ENCODE measurements at regions of chr17 and their contacts with region 1.

Region 1: DNA sequence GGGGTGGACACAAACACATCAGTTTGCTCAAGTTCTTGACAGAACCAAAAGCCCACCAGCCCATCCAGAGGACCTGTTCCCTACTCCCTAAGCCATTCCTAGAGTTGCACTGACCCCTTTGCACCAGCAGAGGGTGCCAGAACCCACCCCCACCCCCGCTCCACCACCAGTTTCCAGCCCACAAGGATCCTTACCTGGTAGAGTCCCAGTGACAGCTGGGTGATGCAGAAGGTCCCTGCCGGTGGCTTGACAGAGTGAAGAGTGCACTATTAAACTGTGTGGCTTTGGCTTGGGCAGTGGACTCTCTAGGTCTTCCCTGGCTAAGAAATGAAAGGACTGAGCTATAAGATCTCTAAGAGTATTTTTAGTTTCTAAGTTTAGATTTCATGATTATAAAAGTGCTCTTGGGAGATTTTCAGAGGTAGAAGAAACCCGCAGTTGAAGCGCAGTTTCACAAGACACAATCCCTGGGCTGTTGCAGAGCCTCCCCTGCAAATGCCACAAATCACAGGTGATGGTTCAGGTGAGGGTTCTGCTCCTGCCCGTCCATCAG is 73.3 kb upstream of the MTMR4 start:
- DNase-seq: peak; percentile 55 to 78
- ATAC-seq: peak; percentile 68
- H3K4me3 ChIP-seq: no peak overlapping the region
- H3K27ac ChIP-seq: no peak overlapping the region
- H3K4me1 ChIP-seq: no peaks in the 10 kb centered on the region
- H3K27me3 ChIP-seq: no peaks in the 10 kb centered on the region

Region 2: DNA sequence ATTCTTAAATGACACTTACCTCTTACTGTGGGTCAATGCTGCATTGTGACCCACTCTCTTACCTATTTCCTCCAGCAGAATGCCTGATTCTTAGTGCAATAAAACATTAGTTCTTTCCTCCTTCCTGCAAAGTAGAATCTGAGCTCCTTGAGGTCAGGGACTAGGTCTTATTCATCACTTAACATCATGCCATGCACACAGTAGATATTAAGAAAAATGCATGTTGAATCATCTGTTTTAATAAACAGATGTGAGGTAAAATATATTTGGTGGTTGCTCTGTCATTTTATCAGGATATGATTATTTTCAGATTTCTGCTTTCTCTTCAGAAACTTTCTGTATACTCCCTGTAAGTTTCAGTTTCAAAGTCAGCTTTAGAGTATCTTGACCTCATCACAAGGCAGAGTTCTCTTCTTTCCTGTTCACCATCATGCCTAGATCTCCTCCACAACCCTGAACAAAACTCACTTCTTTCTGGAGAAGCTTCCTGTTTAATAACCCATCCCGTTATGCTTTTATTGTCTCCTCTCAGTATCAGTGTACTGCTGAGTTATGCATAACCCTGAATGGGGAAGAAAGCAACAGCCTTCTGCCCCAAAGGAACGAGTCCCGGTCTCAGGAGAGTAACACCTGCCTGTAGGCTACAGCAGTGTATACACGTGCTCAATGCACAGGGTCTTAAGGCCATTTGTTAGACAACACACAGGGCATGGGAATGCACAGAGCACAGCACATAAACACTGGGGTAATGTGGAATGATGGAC is 205.5 kb before region 1 on chr17:
- intact Hi-C with region 1: no loop called
- DNase-seq: no peak
- ATAC-seq: no peak
- H3K4me3 ChIP-seq: no peak overlapping the region
- H3K27ac ChIP-seq: no peak overlapping the region
- H3K4me1 ChIP-seq: no peaks in the 10 kb centered on the region
- H3K27me3 ChIP-seq: no peaks in the 10 kb centered on the region

Region 3: DNA sequence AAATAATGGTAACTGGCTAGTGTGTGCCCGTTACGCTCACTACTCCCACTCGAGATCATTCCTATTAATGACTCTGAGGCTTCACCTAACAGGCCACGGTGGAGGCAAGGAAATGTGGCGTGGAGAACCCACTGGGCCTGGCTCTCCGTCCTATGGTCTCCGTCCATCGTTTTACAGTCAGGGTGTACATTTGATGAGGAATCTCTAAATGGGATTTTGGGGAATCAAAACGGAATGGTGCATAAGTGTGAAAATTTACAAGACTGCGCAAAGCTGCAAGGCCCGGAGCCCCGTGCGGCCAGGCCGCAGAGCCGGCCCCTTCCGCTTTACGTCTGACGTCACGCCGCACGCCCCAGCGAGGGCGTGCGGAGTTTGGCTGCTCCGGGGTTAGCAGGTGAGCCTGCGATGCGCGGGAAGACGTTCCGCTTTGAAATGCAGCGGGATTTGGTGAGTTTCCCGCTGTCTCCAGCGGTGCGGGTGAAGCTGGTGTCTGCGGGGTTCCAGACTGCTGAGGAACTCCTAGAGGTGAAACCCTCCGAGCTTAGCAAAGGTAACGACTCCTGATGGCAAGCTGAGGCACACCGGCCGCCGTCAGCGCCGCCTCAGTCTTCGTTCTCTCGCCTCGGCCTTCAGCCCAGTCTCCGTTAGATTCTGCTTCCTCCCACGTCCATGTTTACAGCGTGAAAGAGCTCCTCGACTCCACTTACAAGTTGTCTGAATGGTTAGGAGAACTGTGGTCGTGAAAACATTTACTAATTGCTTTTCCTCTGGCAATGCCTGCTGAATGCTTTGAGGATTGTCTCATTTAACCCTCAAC is 104.7 kb after region 1 on chr17 and contains the start of gene RAD51C:
- intact Hi-C with region 1: loop called in 1 of 2 experiments (anchors 10 kb)
- DNase-seq: peak; percentile 92 to 93
- ATAC-seq: peak; percentile 96
- H3K4me3 ChIP-seq: peak within 1 kb of the TSS; percentile 36 to 73
- H3K27ac ChIP-seq: peak within 1 kb of the TSS; percentile 23 to 66
- H3K4me1 ChIP-seq: no peaks in the 10 kb centered on the region
- H3K27me3 ChIP-seq: no peaks in the 10 kb centered on the region
- total RNA-seq, gene RAD51C: 21.0 to 25.0 TPM

Region 4: DNA sequence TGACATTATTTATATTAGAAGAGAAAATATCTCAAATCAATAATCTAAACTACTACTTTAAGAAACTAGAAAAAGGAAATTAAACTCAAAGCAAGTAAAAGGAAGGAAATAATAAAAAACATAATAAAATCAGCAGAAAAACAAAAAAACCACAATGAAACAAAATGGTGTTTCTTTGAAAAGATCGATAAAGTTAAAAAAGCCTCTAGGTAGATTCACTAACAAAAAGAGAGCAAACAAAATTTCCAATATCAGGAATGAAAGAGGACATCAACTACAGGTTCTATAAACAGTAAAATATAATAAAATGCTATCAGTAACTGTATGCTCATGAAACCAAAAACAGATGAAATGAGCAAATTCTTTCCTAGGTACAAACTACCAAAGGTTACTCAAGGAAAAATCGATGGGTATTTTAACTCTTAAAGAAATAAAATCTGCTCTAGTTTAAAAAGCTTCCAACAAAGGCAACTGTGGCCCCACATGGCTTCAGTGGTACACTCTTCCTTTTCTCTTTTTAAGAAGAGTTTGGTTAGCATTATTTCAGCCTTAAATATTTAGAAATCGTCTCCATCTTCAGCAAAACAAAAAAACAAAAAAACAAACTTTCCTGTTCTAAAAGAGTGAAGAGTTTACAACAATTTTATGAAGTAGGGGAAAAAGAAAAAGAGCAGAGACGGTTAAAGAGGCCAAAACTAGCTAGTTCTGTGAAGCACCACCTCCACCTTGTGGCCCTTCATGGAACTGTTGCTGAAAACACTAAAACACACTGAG is 416.7 kb after region 1 on chr17:
- intact Hi-C with region 1: loop called (anchors 5 to 10 kb)
- DNase-seq: peak in 1 of 2 donors; percentile 51
- ATAC-seq: peak; percentile 87
- H3K4me3 ChIP-seq: no peak overlapping the region
- H3K27ac ChIP-seq: no peak overlapping the region
- H3K4me1 ChIP-seq: no peaks in the 10 kb centered on the region
- H3K27me3 ChIP-seq: no peaks in the 10 kb centered on the region

Measured in aorta (tissue), 5 donors.